ENCODE measurements at regions of chr9 and their contacts with region 1.

Region 1: DNA sequence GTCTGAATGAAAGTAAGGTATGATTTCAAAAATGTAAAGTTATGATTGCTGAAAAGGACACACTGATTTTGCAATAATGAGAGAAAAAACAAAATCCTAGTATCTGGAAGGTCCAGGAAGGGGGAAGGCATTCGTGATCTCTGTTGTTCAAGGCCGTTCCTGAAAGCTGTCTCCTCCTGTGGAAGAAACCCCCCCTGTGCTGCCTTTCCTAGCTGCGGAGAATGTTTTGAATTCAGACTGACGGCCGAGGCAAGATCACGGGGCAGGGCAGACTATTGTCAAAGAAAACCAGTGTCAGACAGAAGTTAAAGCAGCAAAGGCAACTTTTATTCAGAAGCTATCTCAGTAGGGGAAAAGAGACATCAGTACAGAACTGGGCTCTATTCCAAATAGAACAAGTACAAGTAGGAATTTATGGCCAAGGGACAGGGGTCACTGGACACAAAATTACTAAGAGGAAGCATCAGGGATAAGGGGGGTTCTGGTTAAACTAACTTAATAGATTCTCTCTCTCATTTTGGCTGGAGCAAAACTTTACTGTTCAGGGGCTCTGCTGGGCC is 61.9 kb upstream of the IGFBPL1 start:
- DNase-seq: no peak
- H3K4me3 ChIP-seq: no peak overlapping the region
- H3K4me3 Mint-ChIP-seq: no peak overlapping the region
- H3K27ac Mint-ChIP-seq: no peak overlapping the region
- H3K4me1 ChIP-seq: no peaks in the 10 kb centered on the region
- H3K4me1 Mint-ChIP-seq: no peaks in the 10 kb centered on the region
- H3K27me3 ChIP-seq: no peaks in the 10 kb centered on the region
- H3K27me3 Mint-ChIP-seq: no peaks in the 10 kb centered on the region
- CTCF ChIP-seq: no peak

Region 2: DNA sequence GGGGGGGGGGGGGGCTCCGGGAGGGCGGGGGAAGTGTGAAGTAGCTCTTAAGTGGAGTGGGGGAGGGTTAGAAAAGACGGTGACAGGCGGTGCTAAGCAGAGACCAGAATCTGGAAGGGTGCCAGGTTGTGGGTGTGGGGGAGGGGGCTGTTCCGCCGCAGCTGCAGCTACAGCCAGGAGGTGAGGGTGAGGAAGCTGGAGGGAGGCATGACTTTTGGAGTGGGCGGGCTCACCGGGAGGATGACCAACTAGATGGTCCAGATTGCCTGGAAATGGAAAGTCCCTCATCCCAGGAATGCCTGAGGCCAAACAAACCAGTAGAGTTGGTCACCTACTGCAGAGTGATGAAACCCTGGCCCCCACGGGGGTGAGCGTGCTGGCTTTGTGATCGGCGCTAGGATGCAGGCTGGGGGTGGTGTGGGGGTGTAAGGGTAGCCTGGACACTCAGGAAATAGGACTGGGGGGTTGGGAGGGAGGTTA is 259.0 kb before region 1 on chr9:
- CTCF ChIA-PET with region 1: no interaction called
- POLR2A ChIA-PET with region 1: no interaction called
- intact Hi-C with region 1: no loop called
- DNase-seq: peak; percentile 92 to 98
- H3K4me3 ChIP-seq: peak overlapping the region; percentile 25
- H3K4me3 Mint-ChIP-seq: peak overlapping the region; percentile 82
- H3K27ac Mint-ChIP-seq: peak overlapping the region; percentile 57
- H3K4me1 ChIP-seq: peaks cover 30% of the 10 kb centered on the region
- H3K4me1 Mint-ChIP-seq: peaks cover 10% of the 10 kb centered on the region
- H3K27me3 ChIP-seq: no peaks in the 10 kb centered on the region
- H3K27me3 Mint-ChIP-seq: no peaks in the 10 kb centered on the region
- CTCF ChIP-seq: no peak

Region 3: GRCh38 chr9:38432922-38433510 is 53.1 kb before region 1 on chr9:
- CTCF ChIA-PET with region 1: no interaction called
- POLR2A ChIA-PET with region 1: no interaction called
- intact Hi-C with region 1: no loop called
- DNase-seq: peak in 1 of 2 experiments; percentile 35
- H3K4me3 ChIP-seq: no peak overlapping the region
- H3K4me3 Mint-ChIP-seq: no peak overlapping the region
- H3K27ac Mint-ChIP-seq: no peak overlapping the region
- H3K4me1 ChIP-seq: peaks cover 29% of the 10 kb centered on the region
- H3K4me1 Mint-ChIP-seq: peaks cover 41% of the 10 kb centered on the region
- H3K27me3 ChIP-seq: no peaks in the 10 kb centered on the region
- H3K27me3 Mint-ChIP-seq: no peaks in the 10 kb centered on the region
- CTCF ChIP-seq: peak; percentile 36 to 72

Region 4: DNA sequence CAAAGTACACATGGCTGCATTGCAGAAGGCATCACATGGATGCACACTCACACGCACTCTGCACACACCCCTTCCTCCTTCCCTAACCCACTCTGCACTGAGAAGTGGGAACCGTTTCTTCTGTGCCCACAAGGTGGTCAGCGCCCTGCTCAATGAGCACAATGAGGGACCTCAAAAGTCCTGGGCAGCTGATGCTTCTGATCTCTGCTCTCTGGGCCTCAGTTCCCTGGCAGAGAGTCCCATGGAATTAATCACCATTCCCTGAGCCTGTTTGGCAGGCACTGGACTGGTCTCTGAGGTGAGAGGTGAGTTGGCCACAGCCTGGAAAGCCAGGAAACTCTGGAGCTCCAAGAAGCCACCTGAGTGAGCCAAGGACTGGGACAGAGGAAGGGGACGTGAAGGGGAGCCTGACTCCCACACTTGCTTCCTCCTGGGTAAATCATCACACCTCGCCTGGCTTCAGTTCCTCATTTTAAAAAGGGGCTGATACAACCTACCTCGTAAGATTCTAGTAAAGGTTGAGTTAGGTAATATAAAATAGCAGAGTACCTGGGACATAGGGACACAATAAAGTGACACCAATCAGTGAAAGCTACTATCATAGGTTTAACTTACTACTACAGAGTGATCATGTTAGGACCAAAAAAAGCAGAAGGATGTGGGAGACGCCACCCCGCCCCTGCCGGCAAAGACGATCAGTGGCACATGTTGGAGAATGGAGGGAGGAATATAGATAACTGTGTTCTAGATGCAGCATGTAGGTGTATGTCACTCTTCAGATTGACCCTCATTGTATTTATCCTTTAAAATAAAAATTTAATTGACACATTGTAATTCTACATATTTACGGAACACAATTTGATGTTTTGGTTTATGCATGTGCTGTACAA is 40.7 kb before region 1 on chr9:
- CTCF ChIA-PET with region 1: no interaction called
- POLR2A ChIA-PET with region 1: no interaction called
- intact Hi-C with region 1: loop called (anchors 10 kb)
- DNase-seq: no peak
- H3K4me3 ChIP-seq: no peak overlapping the region
- H3K4me3 Mint-ChIP-seq: no peak overlapping the region
- H3K27ac Mint-ChIP-seq: no peak overlapping the region
- H3K4me1 ChIP-seq: peaks cover 17% of the 10 kb centered on the region
- H3K4me1 Mint-ChIP-seq: peaks cover 17% of the 10 kb centered on the region
- H3K27me3 ChIP-seq: no peaks in the 10 kb centered on the region
- H3K27me3 Mint-ChIP-seq: no peaks in the 10 kb centered on the region
- CTCF ChIP-seq: no peak

Region 5: GRCh38 chr9:38620483-38621433 is 134.6 kb after region 1 on chr9 and contains the start of gene ANKRD18A:
- CTCF ChIA-PET with region 1: no interaction called
- POLR2A ChIA-PET with region 1: no interaction called
- intact Hi-C with region 1: no loop called
- DNase-seq: peak; percentile 81 to 90
- H3K4me3 ChIP-seq: peak within 1 kb of the TSS; percentile 61
- H3K4me3 Mint-ChIP-seq: peak within 1 kb of the TSS; percentile 76
- H3K27ac Mint-ChIP-seq: peak within 1 kb of the TSS; percentile 48
- H3K4me1 ChIP-seq: no peaks in the 10 kb centered on the region
- H3K4me1 Mint-ChIP-seq: no peaks in the 10 kb centered on the region
- H3K27me3 ChIP-seq: peaks cover 2% of the 10 kb centered on the region
- H3K27me3 Mint-ChIP-seq: peaks cover 17% of the 10 kb centered on the region
- CTCF ChIP-seq: peak; percentile 60 to 81
- total RNA-seq, gene ANKRD18A: 0.16 and 2.6 TPM in 2 replicates